ENCODE measurements at regions of chr10 and their contacts with region 1.

Region 1: DNA sequence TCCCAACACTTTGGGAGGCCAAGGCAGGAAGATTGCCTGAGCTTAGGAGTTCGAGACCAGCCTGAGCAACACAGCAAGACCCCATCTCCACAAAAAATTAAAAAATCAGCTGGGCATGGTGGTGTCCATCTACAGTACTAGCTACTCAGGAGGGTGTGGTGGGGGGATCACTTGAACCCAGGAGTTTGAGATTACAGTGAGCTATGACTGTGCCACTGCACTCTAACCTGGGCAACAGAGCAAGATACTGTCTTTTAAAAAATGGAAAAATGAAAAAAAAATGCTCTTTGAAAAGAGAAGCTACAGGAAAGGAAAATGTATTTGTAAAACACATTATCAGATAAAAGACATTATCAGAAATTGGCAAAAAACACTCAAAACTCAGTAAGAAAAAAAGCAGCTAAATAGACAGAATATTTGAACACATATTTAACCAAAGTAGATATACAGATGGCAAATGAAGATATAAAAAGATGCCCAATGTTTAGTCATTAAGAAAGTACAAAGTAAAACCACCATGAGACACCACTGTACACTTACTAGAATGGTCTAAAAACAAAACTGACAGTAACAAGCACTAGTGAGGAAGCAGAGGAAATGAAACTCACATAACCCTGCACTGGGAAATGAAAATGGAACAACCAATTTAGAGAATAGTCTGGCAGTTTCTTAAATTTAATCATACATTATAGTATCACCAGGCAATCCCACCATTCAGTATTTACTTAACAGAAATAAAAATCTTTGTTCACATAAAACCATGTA is 40.5 kb downstream of the NRBF2 start:
- DNase-seq: no peak
- H3K4me3 Mint-ChIP-seq: no peak overlapping the region
- H3K27ac Mint-ChIP-seq: peak overlapping the region; percentile 65
- H3K4me1 Mint-ChIP-seq: peaks cover 52% of the 10 kb centered on the region
- H3K27me3 Mint-ChIP-seq: no peaks in the 10 kb centered on the region

Region 2: DNA sequence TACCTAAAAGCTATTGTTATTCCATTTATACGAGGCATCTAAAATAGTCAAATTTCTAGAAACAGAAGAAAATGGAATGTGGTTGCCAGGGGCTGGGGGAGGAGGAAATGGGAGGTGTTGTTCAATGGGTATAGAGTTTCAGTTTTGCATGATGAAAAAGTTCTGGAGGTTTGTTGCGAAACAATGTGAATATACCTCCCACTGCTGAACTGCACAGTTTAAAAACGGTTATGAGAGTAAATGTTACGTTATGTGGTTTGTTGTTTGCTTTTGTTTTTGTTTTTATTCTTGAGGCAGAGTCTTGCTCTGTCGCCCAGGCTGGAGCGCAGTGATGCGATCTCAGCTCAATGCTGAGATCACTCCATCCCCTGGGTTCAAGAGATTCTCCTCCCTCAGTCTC is 105.4 kb before region 1 on chr10:
- CTCF ChIA-PET with region 1: no interaction called
- POLR2A ChIA-PET with region 1: no interaction called
- intact Hi-C with region 1: no loop called
- DNase-seq: peak; percentile 31
- H3K4me3 Mint-ChIP-seq: peak overlapping the region; percentile 12
- H3K27ac Mint-ChIP-seq: no peak overlapping the region
- H3K4me1 Mint-ChIP-seq: peaks cover 13% of the 10 kb centered on the region
- H3K27me3 Mint-ChIP-seq: peaks cover 51% of the 10 kb centered on the region

Region 3: DNA sequence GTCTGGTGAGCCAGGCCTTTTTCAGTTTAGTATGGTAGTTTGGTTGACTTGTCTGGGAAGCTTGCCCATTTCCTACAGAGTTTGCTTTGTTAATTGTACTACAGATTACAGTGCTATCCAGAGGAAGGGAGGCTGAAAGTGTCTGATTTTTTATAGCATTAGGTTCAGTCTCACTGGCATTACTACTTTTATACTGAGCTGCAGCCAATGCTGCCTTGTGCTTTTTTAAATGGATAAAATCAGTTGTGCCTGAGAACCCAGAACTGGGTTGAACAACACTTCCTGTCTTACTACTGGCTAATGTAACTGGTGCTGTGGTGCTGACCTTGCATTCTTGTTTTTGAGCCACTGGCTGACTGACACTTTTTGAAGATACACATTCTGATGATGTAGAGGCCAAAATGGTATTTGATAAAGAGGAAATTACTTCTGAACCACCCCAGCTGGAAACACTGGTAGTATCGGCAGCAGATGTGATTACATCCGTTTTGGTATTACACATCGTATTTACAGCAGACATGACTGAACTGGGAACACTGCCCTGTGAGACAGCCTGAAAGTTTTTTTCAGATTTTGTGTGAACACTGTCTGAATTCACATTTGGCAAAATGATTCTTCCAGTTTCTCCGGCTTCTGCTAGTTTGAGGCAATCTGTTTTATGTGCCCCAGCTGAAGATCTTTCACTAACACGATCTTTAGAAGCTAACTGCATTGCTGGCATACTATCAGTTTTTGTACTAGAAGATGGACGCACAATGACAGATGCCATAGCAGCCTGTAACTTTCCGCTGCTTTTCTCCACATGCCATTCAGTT is 33.6 kb after region 1 on chr10:
- CTCF ChIA-PET with region 1: no interaction called
- POLR2A ChIA-PET with region 1: no interaction called
- intact Hi-C with region 1: loop called (anchors 1 kb)
- DNase-seq: peak; percentile 20
- H3K4me3 Mint-ChIP-seq: no peak overlapping the region
- H3K27ac Mint-ChIP-seq: peak overlapping the region; percentile 56
- H3K4me1 Mint-ChIP-seq: peaks cover 60% of the 10 kb centered on the region
- H3K27me3 Mint-ChIP-seq: no peaks in the 10 kb centered on the region

Region 4: GRCh38 chr10:63573068-63573697 is 399.5 kb after region 1 on chr10:
- CTCF ChIA-PET with region 1: no interaction called
- POLR2A ChIA-PET with region 1: no interaction called
- intact Hi-C with region 1: loop called (anchors 5 kb)
- DNase-seq: no peak
- H3K4me3 Mint-ChIP-seq: no peak overlapping the region
- H3K27ac Mint-ChIP-seq: peak overlapping the region; percentile 40
- H3K4me1 Mint-ChIP-seq: peaks cover 28% of the 10 kb centered on the region
- H3K27me3 Mint-ChIP-seq: no peaks in the 10 kb centered on the region